ENCODE measurements at regions of chr1 and their contacts with region 1.

Region 1: GRCh38 chr1:222582099-222582774 is 7.5 kb downstream of the TAF1A start:
- DNase-seq: no peak
- H3K4me3 ChIP-seq: no peak overlapping the region
- H3K27ac ChIP-seq: no peak overlapping the region
- H3K4me1 ChIP-seq: peaks cover 13% of the 10 kb centered on the region
- CTCF ChIP-seq: no peak

Region 2: DNA sequence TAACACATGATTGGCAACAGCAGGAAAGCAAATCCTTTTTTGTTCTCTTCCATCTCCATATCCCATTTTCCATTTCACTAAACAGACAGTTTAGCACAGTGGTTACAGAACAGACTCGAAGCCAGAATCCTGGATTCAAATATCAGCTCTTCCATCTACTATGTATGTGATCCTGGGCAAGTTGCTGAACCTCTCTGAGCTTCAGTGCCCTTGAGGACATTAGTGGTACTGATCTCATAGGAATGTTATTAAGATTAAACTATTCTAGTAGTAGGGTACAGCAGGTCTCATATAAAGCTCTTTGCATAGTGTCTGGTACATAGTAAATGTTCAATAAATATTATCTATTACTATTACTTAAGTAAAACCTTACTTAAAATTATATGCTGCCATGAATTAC is 20.6 kb before region 1 on chr1:
- CTCF ChIA-PET with region 1: no interaction called
- POLR2A ChIA-PET with region 1: interaction called, 11 read pairs
- intact Hi-C with region 1: no loop called
- DNase-seq: no peak
- H3K4me3 ChIP-seq: no peak overlapping the region
- H3K27ac ChIP-seq: no peak overlapping the region
- H3K4me1 ChIP-seq: no peaks in the 10 kb centered on the region
- CTCF ChIP-seq: no peak

Region 3: GRCh38 chr1:222772996-222773379 is 190.8 kb after region 1 on chr1:
- CTCF ChIA-PET with region 1: no interaction called
- POLR2A ChIA-PET with region 1: no interaction called
- intact Hi-C with region 1: no loop called
- DNase-seq: peak; percentile 87
- H3K4me3 ChIP-seq: peak overlapping the region; percentile 27
- H3K27ac ChIP-seq: peak overlapping the region; percentile 82
- H3K4me1 ChIP-seq: peaks cover 25% of the 10 kb centered on the region
- CTCF ChIP-seq: no peak

Measured in OCI-LY7 (cell line).